ENCODE measurements at regions of chr4 and their contacts with region 1.

Region 1: DNA sequence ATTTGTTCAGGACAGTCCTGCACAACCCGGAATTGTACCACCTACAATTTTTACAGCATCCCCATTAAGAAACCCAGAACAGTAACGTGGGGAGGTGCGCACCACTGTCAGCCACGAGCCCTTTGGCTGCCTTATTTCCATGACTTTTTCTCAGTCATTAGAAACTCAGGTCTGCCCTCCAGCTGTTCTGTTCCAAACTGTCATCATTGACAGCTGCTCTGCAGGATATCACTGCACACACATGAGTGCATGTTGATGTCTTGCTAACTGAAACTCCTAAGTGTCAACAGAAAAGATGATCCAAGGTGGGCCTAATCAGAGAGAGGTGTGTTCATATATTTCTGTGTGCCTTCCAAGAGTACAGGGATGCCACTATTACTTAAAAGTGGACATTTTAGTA is 123.4 kb downstream of the PARM1 start:
- DNase-seq: no peak
- ATAC-seq: peak; percentile 38 to 78

Region 2: DNA sequence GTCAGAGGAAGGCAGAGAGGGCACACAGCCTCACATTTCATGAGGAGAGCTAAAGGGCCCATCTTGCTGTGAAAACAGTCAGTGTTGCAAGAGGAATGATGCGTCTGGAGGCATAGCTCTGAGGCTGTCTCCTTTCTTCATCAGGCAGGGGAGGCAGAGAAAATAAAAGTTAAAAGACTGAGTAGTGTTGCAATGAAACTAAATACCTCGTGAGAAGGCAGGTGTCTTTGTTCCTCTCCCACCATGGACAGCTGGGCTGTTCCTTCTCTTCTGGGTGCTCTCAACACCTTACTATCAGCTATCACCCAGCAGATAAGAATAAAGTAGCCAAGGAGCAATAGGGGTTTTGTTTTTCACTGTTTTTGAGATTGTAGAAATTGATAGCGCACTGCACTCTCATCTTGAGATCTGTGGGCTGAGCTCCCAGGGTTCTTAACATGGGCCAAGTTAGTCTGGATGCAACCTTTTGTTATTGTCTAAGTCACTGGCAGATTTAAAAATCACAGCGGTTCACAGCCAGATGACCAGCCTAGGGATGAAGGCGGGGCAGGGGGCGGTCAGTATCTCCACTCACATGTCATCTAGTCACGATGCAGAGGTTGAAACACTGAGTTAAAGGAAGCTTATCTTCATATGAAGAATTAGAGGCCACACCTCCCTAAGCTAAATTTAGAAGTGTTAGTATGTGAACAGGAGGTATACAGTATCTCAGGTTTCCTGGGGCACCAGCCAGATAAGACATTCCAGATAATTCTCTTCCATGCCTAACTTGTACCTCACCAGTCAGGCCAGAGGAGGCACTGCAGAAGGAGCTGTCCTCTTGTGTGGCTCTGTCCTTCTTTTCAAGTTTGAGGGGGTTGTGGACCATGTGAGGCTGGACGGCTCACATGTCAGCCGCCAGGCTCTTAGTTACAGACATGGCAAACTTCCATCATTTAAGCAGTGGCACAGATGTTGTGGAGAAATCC is 86.5 kb before region 1 on chr4:
- intact Hi-C with region 1: loop called in 1 of 2 experiments (anchors 10 kb)
- DNase-seq: peak; percentile 47
- ATAC-seq: peak; percentile 87 to 88

Region 3: GRCh38 chr4:75229806-75230570 is 173.7 kb after region 1 on chr4:
- intact Hi-C with region 1: no loop called
- DNase-seq: no peak
- ATAC-seq: no peak

Region 4: GRCh38 chr4:76067652-76068286 is 1011.5 kb after region 1 on chr4:
- intact Hi-C with region 1: no loop called
- DNase-seq: peak; percentile 75
- ATAC-seq: peak; percentile 70 to 85

Measured in left cardiac atrium (tissue), 4 donors.